ENCODE measurements at regions of chr3 and their contacts with region 1.

Region 1: DNA sequence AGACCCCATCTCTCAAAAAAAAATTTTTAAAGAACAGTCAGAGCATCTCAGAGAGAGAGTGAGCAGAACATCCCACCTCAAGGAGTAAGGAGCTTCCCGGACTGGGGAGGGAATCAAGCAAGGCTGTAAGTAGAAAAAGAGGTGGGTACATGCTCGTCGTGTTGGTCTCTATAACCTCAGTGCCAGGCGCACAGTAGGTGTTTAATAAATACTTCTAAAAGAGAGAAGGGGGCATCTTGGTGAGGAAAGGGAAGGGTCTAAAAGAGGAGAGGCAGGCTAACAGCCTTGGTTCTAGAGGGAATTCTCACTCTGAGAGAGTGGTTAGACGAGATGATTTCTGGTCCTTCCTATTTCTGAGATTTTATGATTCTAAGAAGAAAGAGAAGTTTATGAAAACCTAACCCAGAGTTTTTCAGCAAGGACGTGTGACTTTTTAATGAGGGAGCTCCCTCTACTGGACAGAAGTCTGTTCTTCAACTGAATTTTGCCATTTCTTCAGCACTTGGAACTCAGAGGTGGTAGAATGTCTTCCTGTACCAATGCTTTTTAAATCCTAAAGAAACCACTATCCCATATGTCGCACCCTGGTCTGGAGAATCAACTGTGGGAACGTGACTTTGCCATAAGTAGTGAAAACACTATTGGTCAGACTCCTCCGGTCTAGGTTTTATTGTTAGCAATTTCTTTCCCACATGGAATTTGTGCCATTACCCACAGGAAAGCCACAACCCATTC is 199.7 kb upstream of the LMCD1 start:
- DNase-seq: peak; percentile 27

Region 2: DNA sequence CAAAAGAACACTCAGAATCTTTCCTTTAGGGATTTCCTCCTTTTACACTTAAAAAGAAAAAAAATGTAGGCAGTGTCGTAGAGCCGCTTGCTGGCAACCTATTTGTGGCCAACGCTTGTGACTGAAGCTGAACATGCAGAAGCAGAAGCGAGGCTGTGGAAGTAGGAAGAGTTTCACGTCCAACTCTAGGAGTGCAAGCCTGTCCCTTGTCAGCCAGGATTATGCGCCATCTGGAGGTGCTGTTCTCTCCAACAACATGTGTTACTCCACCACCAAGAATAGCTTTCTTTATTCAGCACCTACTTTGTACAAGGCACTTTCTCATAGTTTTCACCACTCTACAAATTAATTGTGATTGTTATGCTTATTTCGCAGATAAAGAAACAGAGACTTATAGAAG is 23.4 kb before region 1 on chr3:
- CTCF ChIA-PET with region 1: no interaction called
- POLR2A ChIA-PET with region 1: no interaction called
- DNase-seq: peak; percentile 11

Region 3: GRCh38 chr3:8290611-8291010 is 11.3 kb before region 1 on chr3:
- CTCF ChIA-PET with region 1: interaction called, 10 read pairs
- POLR2A ChIA-PET with region 1: interaction called, 3 read pairs
- DNase-seq: no peak

Region 4: DNA sequence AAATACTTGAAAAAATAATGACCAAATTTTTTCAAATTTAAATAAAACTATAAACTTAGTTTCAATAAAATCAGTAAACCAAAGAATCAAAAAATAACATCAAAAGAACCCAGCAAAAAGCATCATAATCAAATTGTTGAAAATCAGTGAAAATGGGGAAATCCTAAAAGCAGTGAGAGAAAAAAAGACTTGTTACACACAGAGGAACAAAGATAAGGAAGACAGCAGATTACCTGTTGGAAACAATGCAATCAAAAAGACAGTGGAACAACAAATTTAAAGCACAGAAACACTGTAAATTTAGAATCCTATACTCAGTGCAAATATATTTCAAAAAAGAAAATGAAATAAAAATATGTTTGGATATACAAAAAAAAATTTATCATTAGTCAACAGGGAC is 43.5 kb after region 1 on chr3:
- CTCF ChIA-PET with region 1: no interaction called
- POLR2A ChIA-PET with region 1: no interaction called
- DNase-seq: no peak